Mammary epithelial cell (primary cell): ENCODE measurements at regions of chr7 and their contacts with region 1.

Region 1: DNA sequence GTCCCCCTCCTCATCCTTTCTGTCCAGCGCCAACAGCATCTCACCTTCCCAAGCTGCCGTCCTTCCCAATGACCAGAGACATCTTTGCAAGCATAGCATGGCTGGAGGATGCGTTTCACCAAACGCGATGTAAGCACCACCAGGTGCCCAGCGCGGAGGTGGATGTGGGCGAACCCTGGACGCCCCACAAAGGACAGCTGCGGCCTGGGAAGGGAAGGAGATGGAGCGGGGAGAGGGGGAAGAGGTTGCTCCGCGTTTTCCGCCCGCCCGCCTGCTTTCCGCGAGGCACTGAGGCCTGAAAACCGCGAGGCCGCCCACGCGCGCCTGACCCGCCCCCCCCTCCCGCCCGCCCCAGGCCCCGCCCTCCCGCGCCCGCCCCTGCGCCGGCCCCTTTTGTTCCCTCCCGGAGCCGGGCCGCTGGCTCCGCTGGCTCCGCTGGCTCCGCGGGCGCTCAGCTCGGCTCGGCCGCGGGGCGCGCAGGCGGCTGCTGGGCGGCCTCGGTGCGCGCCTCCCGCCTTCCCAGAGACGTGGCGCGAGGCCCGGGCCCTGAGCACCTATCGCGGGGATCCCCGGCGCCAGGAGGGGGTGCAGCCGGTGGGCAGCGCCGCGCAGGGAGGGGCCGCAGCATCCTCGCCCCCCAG is at the start of gene CLIP2:
- DNase-seq: peak; percentile 76
- H3K4me3 ChIP-seq: peak within 1 kb of the TSS; percentile 57 to 92 (median 63)
- H3K27ac ChIP-seq: peak within 1 kb of the TSS; percentile 26
- H3K4me1 ChIP-seq: peaks cover 24% of the 10 kb centered on the region
- H3K27me3 ChIP-seq: no peaks in the 10 kb centered on the region
- CTCF ChIP-seq: no peak
- total RNA-seq, gene CLIP2: 34.3 to 37.9 TPM

Region 2: DNA sequence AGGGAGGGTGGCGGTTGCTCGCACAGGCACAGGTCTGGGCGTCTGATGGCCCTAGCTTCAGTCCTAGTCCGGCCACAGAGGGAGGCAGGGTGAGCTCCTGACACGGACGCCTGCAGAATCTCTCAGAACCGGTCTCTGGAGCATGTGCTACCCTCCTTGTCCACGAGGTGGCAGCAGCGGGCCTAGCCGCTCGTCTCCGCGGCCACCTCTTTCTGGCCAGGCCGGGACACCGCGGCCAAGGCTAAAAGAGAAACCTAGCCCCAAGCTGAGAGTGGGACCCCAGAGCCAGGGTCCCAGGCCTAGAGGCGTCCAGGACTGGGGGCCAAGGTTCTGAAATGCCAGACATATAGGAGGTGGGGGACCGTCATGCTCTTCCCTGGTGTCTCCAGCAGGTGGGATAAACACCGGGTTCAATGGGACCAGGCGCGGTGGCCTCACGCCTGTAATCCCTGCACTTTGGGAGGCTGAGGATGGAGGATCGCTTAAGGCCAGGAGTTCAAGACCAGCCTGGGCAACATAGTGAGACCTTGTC is 82.5 kb before region 1 on chr7:
- CTCF ChIA-PET with region 1: no interaction called
- dilution Hi-C with region 1: no loop called
- in situ Hi-C with region 1: no loop called
- intact Hi-C with region 1: loop called (anchors 2 kb)
- DNase-seq: peak; percentile 52
- H3K4me3 ChIP-seq: peak overlapping the region in 1 of 3 experiments; percentile 20
- H3K27ac ChIP-seq: no peak overlapping the region
- H3K4me1 ChIP-seq: peaks cover 13% of the 10 kb centered on the region
- H3K27me3 ChIP-seq: no peaks in the 10 kb centered on the region
- CTCF ChIP-seq: peak; percentile 76 to 95

Region 3: DNA sequence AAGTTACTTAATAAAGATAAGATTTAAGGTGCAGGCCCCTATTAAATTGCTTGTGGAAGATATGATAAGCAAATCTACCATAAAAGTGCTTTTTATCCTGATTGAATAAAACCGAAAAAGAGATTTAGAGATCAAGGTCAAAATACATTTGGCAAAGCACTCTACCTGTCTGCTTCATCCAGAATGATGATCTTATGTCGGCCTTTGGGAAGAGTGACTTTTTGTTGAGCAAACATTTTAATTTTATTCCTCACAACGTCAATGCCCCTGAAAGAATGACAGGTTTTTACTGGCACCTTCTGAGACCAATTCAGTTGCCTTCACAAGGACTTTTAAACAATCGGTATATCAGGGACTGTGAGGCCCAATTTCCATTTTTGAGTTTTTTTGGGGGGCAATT is 42.6 kb before region 1 on chr7:
- CTCF ChIA-PET with region 1: no interaction called
- dilution Hi-C with region 1: loop called (anchors 5 kb)
- in situ Hi-C with region 1: no loop called
- intact Hi-C with region 1: no loop called
- DNase-seq: no peak
- H3K4me3 ChIP-seq: no peak overlapping the region
- H3K27ac ChIP-seq: no peak overlapping the region
- H3K4me1 ChIP-seq: no peaks in the 10 kb centered on the region
- H3K27me3 ChIP-seq: no peaks in the 10 kb centered on the region
- CTCF ChIP-seq: no peak

Region 4: GRCh38 chr7:74272305-74273038 is 16.7 kb before region 1 on chr7:
- CTCF ChIA-PET with region 1: interaction called, 21 read pairs
- dilution Hi-C with region 1: no loop called
- in situ Hi-C with region 1: no loop called
- intact Hi-C with region 1: loop called (anchors 1 kb)
- DNase-seq: peak; percentile 67
- H3K4me3 ChIP-seq: no peak overlapping the region
- H3K27ac ChIP-seq: no peak overlapping the region
- H3K4me1 ChIP-seq: peaks cover 19% of the 10 kb centered on the region
- H3K27me3 ChIP-seq: no peaks in the 10 kb centered on the region
- CTCF ChIP-seq: no peak

Region 5: GRCh38 chr7:74379938-74380337 is 90.8 kb after region 1 on chr7:
- CTCF ChIA-PET with region 1: no interaction called
- dilution Hi-C with region 1: no loop called
- in situ Hi-C with region 1: loop called in 1 of 2 experiments (anchors 25 kb)
- intact Hi-C with region 1: no loop called
- DNase-seq: no peak
- H3K4me3 ChIP-seq: no peak overlapping the region
- H3K27ac ChIP-seq: no peak overlapping the region
- H3K4me1 ChIP-seq: no peaks in the 10 kb centered on the region
- H3K27me3 ChIP-seq: no peaks in the 10 kb centered on the region
- CTCF ChIP-seq: no peak

Region 6: DNA sequence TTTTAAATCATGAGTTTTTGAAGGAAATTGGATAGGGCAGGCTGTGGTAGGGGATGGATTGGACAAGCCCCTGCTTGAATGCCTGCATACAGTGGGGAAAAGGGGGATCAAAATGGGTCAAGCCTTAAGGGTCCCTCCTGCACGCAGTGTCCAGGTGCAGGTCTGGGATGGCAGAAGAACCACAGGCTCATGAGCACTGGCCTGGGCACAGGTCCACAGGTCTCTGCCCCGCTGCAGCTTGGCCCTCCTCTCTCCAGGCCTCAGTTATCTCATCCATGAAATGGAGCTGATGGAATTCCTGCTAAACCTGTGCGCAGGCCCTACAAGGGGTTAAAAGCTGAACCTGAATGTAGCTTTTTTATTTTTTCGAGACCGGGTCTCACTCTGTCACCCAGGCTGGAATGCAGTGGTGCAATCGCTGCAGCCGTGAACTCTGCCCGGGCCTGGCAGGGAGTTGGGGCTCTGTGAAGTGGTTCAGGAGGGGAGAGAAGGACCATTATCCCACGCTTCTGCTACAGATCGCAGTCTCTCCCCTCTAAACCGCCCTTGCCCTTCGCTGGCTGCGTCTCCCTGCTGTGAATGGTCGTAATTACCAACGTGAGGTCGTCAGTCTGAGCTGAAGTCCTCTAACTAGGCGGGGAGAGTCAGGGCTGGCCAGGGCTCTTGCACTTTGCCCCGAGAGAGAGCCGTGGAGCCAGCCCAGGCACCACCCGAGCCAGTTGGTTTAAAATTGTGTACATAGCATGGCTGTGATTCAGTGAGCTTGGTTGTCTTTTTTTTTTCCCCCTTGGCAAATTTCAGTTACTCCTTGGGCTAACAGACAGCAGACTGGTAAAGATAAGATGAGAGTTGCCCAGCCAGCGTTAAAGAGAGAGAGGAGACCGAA is 290.9 kb after region 1 on chr7:
- CTCF ChIA-PET with region 1: no interaction called
- dilution Hi-C with region 1: loop called (anchors 5 kb)
- in situ Hi-C with region 1: no loop called
- intact Hi-C with region 1: no loop called
- DNase-seq: peak; percentile 45
- H3K4me3 ChIP-seq: no peak overlapping the region
- H3K27ac ChIP-seq: no peak overlapping the region
- H3K4me1 ChIP-seq: peaks cover 49% of the 10 kb centered on the region
- H3K27me3 ChIP-seq: no peaks in the 10 kb centered on the region
- CTCF ChIP-seq: no peak